Calu3 (cell line): ENCODE measurements at regions of chr17 and their contacts with region 1.

Region 1: GRCh38 chr17:30093463-30094147 is 23.0 kb upstream of the NSRP1 start:
- DNase-seq: peak; percentile 69
- H3K4me3 Mint-ChIP-seq: no peak overlapping the region
- H3K27ac Mint-ChIP-seq: no peak overlapping the region
- H3K4me1 Mint-ChIP-seq: peaks cover 7% of the 10 kb centered on the region
- H3K27me3 Mint-ChIP-seq: peaks cover 57% of the 10 kb centered on the region
- CTCF ChIP-seq: peak; percentile 51

Region 2: GRCh38 chr17:29640413-29640812 is 453.2 kb before region 1 on chr17:
- CTCF ChIA-PET with region 1: interaction called, 11 read pairs
- intact Hi-C with region 1: no loop called
- DNase-seq: no peak
- H3K4me3 Mint-ChIP-seq: no peak overlapping the region
- H3K27ac Mint-ChIP-seq: no peak overlapping the region
- H3K4me1 Mint-ChIP-seq: peaks cover 18% of the 10 kb centered on the region
- H3K27me3 Mint-ChIP-seq: no peaks in the 10 kb centered on the region
- CTCF ChIP-seq: no peak

Region 3: DNA sequence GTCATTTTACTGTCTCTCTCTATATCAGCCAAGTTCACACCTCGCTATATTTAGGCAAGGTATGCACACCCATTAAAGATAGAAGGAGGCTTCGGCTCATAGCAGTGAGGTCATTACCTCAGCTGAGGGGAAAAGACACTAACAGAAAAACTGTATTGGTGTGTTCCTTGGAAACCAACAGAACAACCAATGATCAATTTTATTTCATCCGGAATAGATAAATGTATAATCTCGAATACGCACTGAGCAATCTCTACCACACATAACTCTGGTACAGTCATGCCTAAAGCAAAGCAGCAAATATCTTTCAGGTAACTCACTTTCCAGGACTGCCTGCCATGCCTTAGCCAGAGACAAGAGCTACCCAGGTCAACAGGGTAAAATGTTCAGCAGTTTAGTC is 361.0 kb before region 1 on chr17:
- CTCF ChIA-PET with region 1: no interaction called
- intact Hi-C with region 1: loop called (anchors 5 kb)
- DNase-seq: no peak
- H3K4me3 Mint-ChIP-seq: no peak overlapping the region
- H3K27ac Mint-ChIP-seq: peak overlapping the region; percentile 20
- H3K4me1 Mint-ChIP-seq: no peaks in the 10 kb centered on the region
- H3K27me3 Mint-ChIP-seq: no peaks in the 10 kb centered on the region
- CTCF ChIP-seq: no peak

Region 4: DNA sequence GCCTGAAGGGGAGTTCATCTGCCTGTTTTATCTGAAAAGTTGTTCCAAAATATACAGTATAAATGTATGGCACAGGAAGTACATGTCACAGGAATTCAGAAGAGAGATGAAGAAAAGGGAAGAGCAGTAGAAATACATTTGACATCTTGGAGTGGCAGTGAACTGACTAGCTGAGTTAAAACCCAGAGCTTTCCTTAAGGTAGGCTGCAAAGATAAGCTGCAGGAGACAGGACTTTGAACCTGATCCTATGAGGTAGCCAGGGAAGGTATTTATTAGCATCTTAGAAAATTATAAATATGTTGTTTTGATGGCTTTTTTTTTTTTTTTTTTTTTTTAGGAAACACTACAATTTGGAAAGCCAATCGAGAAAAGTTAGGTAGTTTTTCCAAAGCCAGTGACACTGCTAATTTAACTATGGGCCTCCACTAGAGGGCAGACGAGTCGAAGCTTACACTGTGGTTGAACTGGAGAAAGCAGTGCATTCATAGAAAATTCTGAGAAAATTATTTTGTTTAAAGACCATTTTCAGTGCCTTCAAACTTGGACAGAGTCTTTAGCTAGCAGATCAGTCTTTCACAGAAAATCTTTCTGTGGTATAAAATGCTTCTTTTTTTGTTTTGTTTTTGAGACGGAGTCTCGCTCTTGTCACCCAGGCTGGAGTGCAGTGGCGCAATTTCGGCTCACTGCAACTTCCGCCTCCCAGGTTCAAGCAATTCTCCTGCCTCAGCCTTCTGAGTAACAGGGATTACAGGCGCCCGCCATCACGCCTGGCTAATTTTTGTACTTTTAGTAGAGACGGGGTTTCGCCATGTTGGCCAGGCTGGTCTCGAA is 285.9 kb before region 1 on chr17:
- CTCF ChIA-PET with region 1: interaction called, 7 read pairs
- intact Hi-C with region 1: loop called (anchors 1 kb)
- DNase-seq: peak; percentile 81
- H3K4me3 Mint-ChIP-seq: no peak overlapping the region
- H3K27ac Mint-ChIP-seq: no peak overlapping the region
- H3K4me1 Mint-ChIP-seq: no peaks in the 10 kb centered on the region
- H3K27me3 Mint-ChIP-seq: no peaks in the 10 kb centered on the region
- CTCF ChIP-seq: peak; percentile 47

Region 5: DNA sequence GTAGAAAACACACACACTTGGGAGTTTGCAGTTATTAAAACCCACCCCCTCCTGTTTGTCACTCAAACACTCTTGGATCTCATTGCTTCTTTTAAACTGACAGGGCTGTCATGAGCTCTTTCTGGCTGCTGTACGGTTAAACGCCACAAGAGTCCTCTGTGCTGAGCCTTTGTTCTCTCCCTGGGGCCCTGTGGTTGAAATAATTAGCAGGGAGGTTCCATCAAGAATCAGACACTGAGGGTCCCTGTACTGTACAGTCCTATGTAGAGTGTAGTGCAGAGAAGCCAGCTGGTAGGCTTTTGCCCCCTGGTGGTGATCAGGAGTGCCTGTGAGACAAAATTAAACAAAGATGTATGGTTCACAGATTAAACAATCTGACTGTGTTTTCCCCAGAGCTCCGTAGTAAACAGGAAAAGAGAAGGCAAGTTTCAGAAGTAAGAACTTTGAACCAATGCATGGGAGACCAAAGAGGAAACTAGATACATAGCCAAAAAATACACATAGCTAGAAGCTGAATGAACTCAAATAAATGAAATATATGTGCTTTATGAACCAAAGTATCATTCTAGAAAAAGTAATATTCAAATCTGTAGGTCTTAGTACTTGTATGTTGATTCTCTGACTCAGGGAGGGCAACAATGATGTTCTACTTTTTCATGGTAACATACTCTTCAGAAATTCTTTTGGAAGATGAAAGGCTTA is 162.2 kb before region 1 on chr17:
- CTCF ChIA-PET with region 1: interaction called, 7 read pairs
- intact Hi-C with region 1: loop called (anchors 5 kb)
- DNase-seq: peak; percentile 68
- H3K4me3 Mint-ChIP-seq: no peak overlapping the region
- H3K27ac Mint-ChIP-seq: no peak overlapping the region
- H3K4me1 Mint-ChIP-seq: peaks cover 16% of the 10 kb centered on the region
- H3K27me3 Mint-ChIP-seq: no peaks in the 10 kb centered on the region
- CTCF ChIP-seq: peak; percentile 80

Region 6: GRCh38 chr17:30027676-30028075 is 65.9 kb before region 1 on chr17:
- CTCF ChIA-PET with region 1: interaction called, 4 read pairs
- intact Hi-C with region 1: loop called (anchors 5 kb)
- DNase-seq: no peak
- H3K4me3 Mint-ChIP-seq: no peak overlapping the region
- H3K27ac Mint-ChIP-seq: no peak overlapping the region
- H3K4me1 Mint-ChIP-seq: no peaks in the 10 kb centered on the region
- H3K27me3 Mint-ChIP-seq: no peaks in the 10 kb centered on the region
- CTCF ChIP-seq: no peak

Region 7: GRCh38 chr17:30104575-30105339 is 11.2 kb after region 1 on chr17:
- CTCF ChIA-PET with region 1: interaction called, 24 read pairs
- intact Hi-C with region 1: no loop called
- DNase-seq: peak; percentile 72
- H3K4me3 Mint-ChIP-seq: peak overlapping the region; percentile 70
- H3K27ac Mint-ChIP-seq: no peak overlapping the region
- H3K4me1 Mint-ChIP-seq: peaks cover 8% of the 10 kb centered on the region
- H3K27me3 Mint-ChIP-seq: no peaks in the 10 kb centered on the region
- CTCF ChIP-seq: peak; percentile 68

Region 8: GRCh38 chr17:30148376-30148775 is 54.8 kb after region 1 on chr17:
- CTCF ChIA-PET with region 1: no interaction called
- intact Hi-C with region 1: no loop called
- DNase-seq: no peak
- H3K4me3 Mint-ChIP-seq: no peak overlapping the region
- H3K27ac Mint-ChIP-seq: no peak overlapping the region
- H3K4me1 Mint-ChIP-seq: no peaks in the 10 kb centered on the region
- H3K27me3 Mint-ChIP-seq: no peaks in the 10 kb centered on the region
- CTCF ChIP-seq: no peak

Region 9: DNA sequence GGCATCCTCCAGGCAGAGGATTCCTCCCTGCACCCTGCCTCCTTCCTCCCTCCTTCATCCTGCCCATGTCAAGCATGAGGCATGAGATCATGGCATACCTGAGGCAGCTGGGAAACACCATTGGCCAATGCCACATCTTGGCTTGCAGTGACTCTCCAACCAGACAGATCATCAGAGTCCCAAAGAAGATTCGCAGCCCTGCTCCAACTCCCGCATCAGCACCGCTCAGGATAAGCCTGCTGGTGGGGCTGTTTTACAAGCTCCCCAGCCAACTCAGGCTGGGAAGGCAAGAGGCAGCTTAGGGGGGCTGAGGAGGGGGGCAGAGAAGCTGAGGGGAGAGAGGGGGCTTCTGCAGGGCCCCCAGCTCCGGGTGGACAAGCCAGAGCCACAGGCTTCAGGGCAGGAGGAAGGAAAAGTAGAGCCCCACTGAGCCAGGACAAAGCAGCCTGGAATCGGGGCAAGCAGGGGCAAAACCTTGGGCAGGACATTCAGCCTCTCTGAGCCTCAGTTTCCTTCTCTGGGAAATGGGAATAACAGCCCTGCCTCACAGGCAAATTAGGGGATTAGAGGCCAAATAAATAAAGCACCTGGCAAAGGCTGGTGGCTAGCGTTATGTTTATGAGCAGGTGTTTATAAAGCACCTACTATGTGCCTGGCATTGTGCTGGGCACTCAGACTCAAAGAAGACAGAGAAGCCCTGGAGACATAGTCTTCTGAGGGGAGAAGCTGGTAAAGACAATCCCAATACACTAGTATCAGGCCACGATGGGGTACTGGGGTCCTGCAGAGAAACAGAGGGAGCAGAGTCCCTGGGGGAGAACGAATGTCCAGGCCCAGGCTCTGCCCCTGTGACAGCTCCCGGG is 471.7 kb after region 1 on chr17:
- CTCF ChIA-PET with region 1: no interaction called
- intact Hi-C with region 1: no loop called
- DNase-seq: no peak
- H3K4me3 Mint-ChIP-seq: no peak overlapping the region
- H3K27ac Mint-ChIP-seq: no peak overlapping the region
- H3K4me1 Mint-ChIP-seq: no peaks in the 10 kb centered on the region
- H3K27me3 Mint-ChIP-seq: peaks cover 77% of the 10 kb centered on the region
- CTCF ChIP-seq: no peak